Ascending aorta (tissue), 2 donors: ENCODE measurements at regions of chr2 and their contacts with region 1.

Region 1: GRCh38 chr2:150487537-150488429 is at the start of gene RND3:
- DNase-seq: peak; percentile 86 to 99
- H3K4me3 ChIP-seq: peak within 1 kb of the TSS; percentile 81 to 88
- H3K27ac ChIP-seq: peak within 1 kb of the TSS; percentile 99 to 100
- H3K4me1 ChIP-seq: peaks cover 0 to 15% of the 10 kb centered on the region in 2 donors
- H3K27me3 ChIP-seq: no peaks in the 10 kb centered on the region
- CTCF ChIP-seq: peak; percentile 79 to 86 (median 80)
- total RNA-seq, gene RND3: 10.7 TPM

Region 2: GRCh38 chr2:148644883-148645538 is 1842.8 kb before region 1 on chr2:
- intact Hi-C with region 1: loop called (anchors 10 kb)
- DNase-seq: peak; percentile 75 to 97
- H3K4me3 ChIP-seq: peak overlapping the region; percentile 89 to 98
- H3K27ac ChIP-seq: peak overlapping the region; percentile 99 to 100
- H3K4me1 ChIP-seq: peaks cover 0 to 14% of the 10 kb centered on the region in 2 donors
- H3K27me3 ChIP-seq: no peaks in the 10 kb centered on the region
- CTCF ChIP-seq: peak in 2 of 3 experiments; percentile 23 to 40

Region 3: DNA sequence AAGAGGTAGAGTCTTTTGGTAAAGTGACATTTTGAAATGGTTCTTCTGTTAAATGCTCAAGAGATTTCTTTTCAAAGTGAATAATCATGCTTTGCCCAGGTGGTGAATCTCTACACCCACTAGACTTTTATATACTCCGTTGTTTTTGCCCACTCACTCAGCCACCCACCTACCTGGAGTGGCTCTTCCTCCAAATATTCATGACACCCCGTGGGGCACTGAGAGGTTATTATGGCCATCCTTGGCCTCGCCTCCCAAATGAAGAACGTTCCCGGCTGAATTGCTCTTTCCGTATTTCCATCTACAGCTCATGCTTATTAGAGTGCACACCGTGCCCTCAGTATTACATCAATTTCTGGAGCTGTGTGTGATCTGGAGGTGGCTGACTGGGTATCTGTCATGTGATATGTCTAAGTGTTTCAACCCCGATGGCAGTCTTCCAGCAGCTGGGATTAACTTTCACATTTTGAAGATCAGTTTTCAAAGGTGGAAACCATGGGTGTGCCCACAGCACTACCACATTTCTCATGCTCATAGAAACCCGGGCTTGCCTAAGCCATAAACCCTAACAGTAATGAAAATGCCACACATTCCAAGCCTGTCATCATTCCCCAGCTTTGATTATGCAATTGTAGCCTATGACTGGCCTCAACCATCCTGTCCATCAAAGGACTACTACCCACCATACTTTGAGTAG is 493.6 kb before region 1 on chr2:
- intact Hi-C with region 1: loop called (anchors 5 kb)
- DNase-seq: no peak
- H3K4me3 ChIP-seq: no peak overlapping the region
- H3K27ac ChIP-seq: peak overlapping the region; percentile 71 to 81
- H3K4me1 ChIP-seq: peaks cover 0 to 26% of the 10 kb centered on the region in 2 donors
- H3K27me3 ChIP-seq: no peaks in the 10 kb centered on the region
- CTCF ChIP-seq: no peak

Region 4: DNA sequence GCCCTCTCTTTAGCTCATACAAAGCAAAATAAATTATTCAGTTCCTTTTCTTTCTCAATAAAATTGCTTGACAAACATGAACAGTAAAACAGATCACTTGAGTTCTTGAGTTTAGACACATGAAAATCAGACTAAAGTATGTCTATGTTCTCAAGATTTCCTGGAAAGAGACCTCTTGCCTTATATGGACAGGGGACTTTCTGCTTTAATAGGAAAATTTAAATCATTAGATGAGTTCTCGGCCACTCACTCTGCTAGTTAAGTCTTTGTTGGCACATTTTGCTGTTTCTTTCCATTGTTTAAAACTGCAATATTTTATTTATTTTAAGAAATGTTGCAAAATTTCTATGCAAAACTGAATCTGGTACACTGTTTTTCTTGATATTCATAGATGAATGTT is 208.1 kb before region 1 on chr2:
- intact Hi-C with region 1: loop called (anchors 2 kb)
- DNase-seq: no peak
- H3K4me3 ChIP-seq: no peak overlapping the region
- H3K27ac ChIP-seq: peak overlapping the region; percentile 38 to 68
- H3K4me1 ChIP-seq: peaks cover 0 to 6% of the 10 kb centered on the region in 2 donors
- H3K27me3 ChIP-seq: no peaks in the 10 kb centered on the region
- CTCF ChIP-seq: no peak

Region 5: DNA sequence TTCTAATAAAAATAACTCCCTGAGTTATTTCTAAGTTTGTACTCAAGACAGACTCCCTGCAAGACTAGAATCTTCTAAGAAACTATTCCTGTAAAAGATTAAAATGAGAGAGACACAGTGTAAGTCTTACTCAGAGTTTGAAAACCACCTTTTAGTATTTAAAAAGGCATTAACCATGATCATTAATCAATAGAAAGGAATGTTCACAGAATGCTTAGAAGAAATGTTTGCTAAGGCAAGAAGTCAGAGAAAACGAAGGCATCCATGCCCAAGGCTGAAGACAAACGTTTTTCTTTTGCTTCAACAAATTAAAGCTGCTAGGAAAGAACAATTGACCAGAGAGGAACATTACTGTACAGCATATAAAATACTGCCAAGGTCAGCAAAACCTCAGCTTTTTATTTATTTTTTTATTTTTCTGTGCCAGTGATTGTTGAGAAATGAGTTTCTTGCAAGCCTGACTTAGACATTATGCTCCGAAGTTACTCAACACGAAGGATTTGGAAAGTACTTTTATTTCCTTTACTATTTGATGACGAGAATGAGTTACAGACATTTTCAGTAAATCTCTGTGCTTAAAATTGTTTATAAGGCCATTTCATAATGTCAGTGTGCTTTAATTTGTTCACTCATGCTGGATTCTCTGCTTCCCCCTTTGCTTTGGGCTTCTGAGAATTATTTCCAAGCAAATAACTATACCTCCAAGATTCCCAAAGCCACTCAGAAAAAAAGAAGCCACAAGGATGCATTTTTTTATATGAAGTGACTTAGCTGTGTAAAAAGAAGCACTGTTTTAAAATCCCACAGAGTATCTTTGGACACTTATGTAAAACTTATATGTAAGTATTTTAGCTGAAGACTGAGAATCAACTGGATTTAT is 20.8 kb before region 1 on chr2:
- intact Hi-C with region 1: loop called (anchors 2 kb)
- DNase-seq: no peak
- H3K4me3 ChIP-seq: peak overlapping the region; percentile 9 to 34
- H3K27ac ChIP-seq: peak overlapping the region; percentile 68
- H3K4me1 ChIP-seq: peaks cover 4 to 18% of the 10 kb centered on the region in 2 donors
- H3K27me3 ChIP-seq: no peaks in the 10 kb centered on the region
- CTCF ChIP-seq: no peak

Region 6: DNA sequence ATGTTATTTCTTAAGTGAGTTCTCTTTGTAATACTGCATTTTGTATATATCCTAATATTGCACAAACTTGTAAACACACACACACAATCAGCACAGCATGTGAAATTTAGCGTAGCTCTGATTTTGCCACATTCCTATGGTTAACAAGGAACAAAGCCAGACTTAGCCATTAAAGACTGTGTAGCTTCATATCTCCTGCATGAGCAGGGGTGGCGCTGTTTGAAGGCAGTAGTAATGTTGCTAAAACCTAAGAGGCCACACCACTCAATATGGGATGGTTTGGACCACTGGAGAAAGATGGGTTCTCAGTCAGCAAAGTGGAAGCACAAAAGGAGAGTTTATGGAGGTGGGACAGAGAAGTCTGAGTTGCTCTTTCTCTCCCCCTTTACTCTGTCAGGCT is 60.7 kb after region 1 on chr2:
- intact Hi-C with region 1: no loop called
- DNase-seq: no peak
- H3K4me3 ChIP-seq: no peak overlapping the region
- H3K27ac ChIP-seq: no peak overlapping the region
- H3K4me1 ChIP-seq: no peaks in the 10 kb centered on the region
- H3K27me3 ChIP-seq: no peaks in the 10 kb centered on the region
- CTCF ChIP-seq: no peak

Region 7: DNA sequence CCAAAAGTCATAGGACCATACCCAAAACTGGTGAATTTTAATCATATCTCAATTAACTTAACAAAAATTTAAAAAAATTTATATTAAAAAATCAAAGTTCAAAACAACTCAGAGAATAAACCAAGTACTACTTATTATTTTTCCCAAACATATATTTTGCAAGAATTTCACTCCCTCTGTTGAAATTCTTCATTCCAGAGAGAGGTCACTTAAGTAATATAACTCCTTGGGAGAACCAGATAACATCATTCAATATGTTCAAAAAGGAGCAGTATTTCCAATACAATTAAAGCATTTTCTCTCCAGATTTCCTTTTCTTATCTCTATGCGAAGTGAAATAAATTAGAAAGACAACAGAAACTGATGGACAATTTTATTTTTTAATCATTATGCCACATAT is 165.6 kb after region 1 on chr2:
- intact Hi-C with region 1: no loop called
- DNase-seq: no peak
- H3K4me3 ChIP-seq: no peak overlapping the region
- H3K27ac ChIP-seq: no peak overlapping the region
- H3K4me1 ChIP-seq: no peaks in the 10 kb centered on the region
- H3K27me3 ChIP-seq: no peaks in the 10 kb centered on the region
- CTCF ChIP-seq: no peak